GM10248 (cell line): ENCODE measurements at regions of chr1 and their contacts with region 1.

Region 1: GRCh38 chr1:165928075-165928731 is 100.8 kb downstream of the UCK2 start:
- DNase-seq: peak; percentile 74
- CTCF ChIP-seq: peak; percentile 65

Region 2: DNA sequence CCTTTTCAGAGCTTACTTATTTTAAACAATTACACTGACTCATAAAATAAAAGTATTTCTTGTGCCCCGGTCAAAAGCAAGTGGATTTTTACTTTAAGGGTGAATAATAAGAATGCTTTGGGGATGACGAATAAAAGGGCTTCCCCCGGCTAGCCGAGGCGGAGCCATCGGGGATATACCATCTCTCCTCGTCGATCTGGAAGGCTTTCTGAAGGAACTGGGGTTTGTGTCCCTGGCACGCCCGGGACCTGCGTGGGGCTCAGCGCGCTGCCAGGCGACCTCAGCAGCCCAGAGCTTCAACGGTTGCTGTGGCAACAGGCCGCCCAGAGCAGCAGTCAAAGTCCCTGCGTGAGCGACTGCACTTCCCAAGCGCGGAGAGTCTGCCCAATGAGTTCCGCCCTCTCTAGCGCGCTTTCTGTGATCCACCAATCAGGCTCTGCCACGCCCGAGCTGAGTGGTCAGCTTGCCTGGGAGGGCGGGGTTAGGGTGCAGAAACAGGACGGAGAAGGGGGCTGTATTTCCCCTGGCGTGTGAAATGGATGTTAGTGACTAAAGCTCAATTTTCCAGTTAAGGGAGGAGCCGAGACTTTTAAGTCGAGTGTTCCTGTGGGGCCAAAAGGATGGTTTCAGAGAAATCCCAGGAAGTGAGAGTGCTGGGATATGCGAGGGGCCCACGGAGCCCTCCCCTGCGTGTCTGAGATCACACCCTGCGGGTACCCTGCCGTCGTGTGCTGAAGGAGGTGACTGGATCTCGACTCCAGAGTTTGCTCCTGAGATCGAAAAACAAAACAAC is 330.1 kb before region 1 on chr1:
- CTCF ChIA-PET with region 1: interaction called, 11 read pairs
- POLR2A ChIA-PET with region 1: no interaction called
- DNase-seq: peak; percentile 95
- CTCF ChIP-seq: no peak

Region 3: GRCh38 chr1:165914136-165914798 is 13.9 kb before region 1 on chr1:
- CTCF ChIA-PET with region 1: interaction called, 65 read pairs
- POLR2A ChIA-PET with region 1: no interaction called
- DNase-seq: peak; percentile 78
- CTCF ChIP-seq: peak; percentile 80

Region 4: DNA sequence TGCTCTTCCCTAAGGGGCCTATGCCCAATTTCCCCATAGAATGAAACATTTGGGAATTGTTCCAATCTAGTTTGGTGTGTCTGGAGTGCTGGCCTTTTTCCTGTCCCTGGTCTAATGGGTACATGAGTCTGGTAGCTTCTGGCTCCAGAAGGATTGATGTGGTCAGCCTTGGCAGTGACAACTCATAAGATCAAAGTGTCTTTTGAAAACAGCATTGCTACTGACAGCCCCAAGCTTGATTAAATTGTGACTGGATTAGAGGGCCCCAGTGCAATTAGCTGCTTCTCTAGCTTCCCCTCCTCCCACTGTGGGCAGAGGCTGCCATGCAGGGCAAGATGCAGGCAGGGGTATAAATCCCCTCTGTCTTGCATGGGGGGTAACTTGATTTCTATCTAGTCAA is 30.1 kb after region 1 on chr1:
- CTCF ChIA-PET with region 1: interaction called, 11 read pairs
- POLR2A ChIA-PET with region 1: no interaction called
- DNase-seq: no peak
- CTCF ChIP-seq: no peak

Region 5: GRCh38 chr1:166233750-166234366 is 305.7 kb after region 1 on chr1:
- CTCF ChIA-PET with region 1: no interaction called
- POLR2A ChIA-PET with region 1: no interaction called
- DNase-seq: no peak
- CTCF ChIP-seq: no peak

Region 6: GRCh38 chr1:166379447-166379846 is 451.2 kb after region 1 on chr1:
- CTCF ChIA-PET with region 1: no interaction called
- POLR2A ChIA-PET with region 1: no interaction called
- DNase-seq: no peak
- CTCF ChIP-seq: no peak

Region 7: GRCh38 chr1:166479052-166479631 is 550.9 kb after region 1 on chr1:
- CTCF ChIA-PET with region 1: interaction called, 78 read pairs
- POLR2A ChIA-PET with region 1: no interaction called
- DNase-seq: peak; percentile 41
- CTCF ChIP-seq: peak; percentile 78